Heart right ventricle (tissue), 16 donors: ENCODE measurements at regions of chr7 and their contacts with region 1.

Region 1: GRCh38 chr7:74289018-74289658 is at the start of gene CLIP2:
- DNase-seq: peak; percentile 79 to 85
- ATAC-seq: peak; percentile 84 to 95 (median 89)
- H3K4me3 ChIP-seq: peak within 1 kb of the TSS; percentile 59 to 91 (median 80)
- H3K27ac ChIP-seq: peak within 1 kb of the TSS in 9 of 10 donors; percentile 68 to 89 (median 80)
- H3K4me1 ChIP-seq: peaks cover 9 to 46% (median 36%) of the 10 kb centered on the region in 9 donors
- H3K27me3 ChIP-seq: no peaks in the 10 kb centered on the region
- CTCF ChIP-seq: no peak
- total RNA-seq, gene CLIP2: 5.1 to 11.3 (median 7.0) TPM

Region 2: DNA sequence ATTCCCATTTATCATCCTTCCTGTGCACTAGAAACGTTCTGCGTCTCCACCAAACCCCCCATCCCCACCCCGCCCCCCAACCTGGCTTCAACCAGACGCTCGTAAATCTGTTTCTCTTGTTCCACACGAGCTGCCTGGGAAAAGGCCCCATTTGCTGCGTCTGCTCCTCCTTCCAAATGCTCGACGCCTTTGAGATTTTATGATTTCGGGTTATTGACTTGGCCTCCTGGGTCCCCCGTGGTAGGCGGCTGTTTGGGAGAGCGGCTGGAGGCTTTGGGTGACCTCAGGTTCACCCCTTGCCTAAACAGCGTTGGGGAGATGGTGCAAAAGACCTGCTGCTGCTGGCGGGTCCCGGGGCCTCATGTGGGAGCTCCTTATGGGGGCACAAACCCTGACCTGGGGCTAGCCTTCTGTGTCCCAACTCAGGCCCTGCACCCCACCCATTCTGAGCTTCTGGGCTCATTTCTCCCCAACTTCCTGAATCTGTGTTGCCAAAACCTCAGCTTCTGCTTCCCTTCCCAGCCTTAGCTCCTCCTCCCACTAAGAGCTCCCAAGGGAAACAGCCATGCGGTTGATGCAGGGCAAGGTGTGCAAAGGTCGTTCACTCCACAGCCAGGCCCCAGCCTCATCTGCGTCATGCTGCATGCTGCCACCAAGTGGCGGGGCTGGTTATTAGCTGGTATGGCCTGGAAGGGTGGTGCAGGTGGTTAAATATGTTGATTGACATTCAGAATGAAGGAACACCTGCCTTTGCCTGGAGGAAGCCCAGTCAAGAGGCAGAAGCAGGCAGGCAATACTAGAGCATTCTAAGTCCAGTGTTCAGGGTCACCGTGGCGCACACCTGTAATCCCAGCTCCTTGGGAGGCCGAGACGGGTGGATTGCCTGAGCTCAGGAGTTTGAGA is 310.2 kb before region 1 on chr7:
- intact Hi-C with region 1: no loop called
- DNase-seq: peak; percentile 41 to 46
- ATAC-seq: peak in 7 of 8 donors; percentile 42 to 73 (median 61)
- H3K4me3 ChIP-seq: no peak overlapping the region
- H3K27ac ChIP-seq: no peak overlapping the region
- H3K4me1 ChIP-seq: peaks cover 0 to 17% (median 11%) of the 10 kb centered on the region in 9 donors
- H3K27me3 ChIP-seq: no peaks in the 10 kb centered on the region
- CTCF ChIP-seq: peak; percentile 10 to 52 (median 41)

Region 3: GRCh38 chr7:74242122-74242443 is 47.1 kb before region 1 on chr7:
- intact Hi-C with region 1: no loop called
- DNase-seq: no peak
- ATAC-seq: no peak
- H3K4me3 ChIP-seq: no peak overlapping the region
- H3K27ac ChIP-seq: peak overlapping the region in 1 of 10 donors; percentile 15
- H3K4me1 ChIP-seq: peaks cover 0 to 10% (median 0%) of the 10 kb centered on the region in 9 donors
- H3K27me3 ChIP-seq: no peaks in the 10 kb centered on the region
- CTCF ChIP-seq: no peak

Region 4: DNA sequence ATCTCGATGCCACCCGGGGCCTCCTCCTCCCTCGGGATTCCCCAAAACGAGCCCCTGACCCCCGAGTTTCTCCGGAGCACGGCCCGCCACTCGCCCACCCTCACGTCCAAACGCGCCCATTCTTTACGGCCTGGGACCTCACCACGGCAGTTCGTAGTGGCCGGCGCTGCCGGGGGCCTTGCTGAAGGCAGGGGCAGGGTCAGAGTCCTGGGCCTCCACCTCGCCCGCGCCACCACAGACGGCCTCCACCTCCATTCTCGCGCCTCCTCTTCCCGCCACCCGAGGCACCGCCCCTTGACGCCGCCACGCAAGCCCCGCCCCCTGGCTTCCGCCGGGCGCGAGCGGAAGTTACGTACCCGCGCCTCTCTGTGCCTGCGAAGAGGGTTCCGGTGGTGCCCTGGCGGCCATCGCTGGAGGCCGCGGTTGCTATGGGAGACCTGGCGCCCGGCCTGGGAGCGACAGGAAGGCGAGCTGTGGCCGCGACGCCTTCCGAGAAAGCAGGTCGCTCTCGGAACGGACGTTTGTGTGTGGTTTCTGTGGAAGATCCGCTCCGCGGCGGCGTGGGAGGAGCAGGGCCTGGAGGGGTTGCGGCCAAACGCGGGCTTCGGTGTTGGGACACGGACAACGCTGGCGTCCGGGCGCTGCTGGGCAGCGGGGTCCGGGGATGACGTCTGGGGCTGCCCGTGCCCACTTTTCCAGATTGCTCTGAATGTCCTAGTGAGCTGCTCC is 34.8 kb before region 1 on chr7 and contains the start of gene RFC2:
- intact Hi-C with region 1: loop called in 6 of 10 experiments (anchors 5 kb)
- DNase-seq: peak; percentile 97 to 98
- ATAC-seq: peak; percentile 99 to 100 (median 100)
- H3K4me3 ChIP-seq: peak within 1 kb of the TSS; percentile 47 to 95 (median 78)
- H3K27ac ChIP-seq: peak within 1 kb of the TSS; percentile 89 to 98 (median 93)
- H3K4me1 ChIP-seq: peaks cover 3 to 38% (median 28%) of the 10 kb centered on the region in 9 donors
- H3K27me3 ChIP-seq: no peaks in the 10 kb centered on the region
- CTCF ChIP-seq: peak in 8 of 9 donors; percentile 16 to 54 (median 43)
- total RNA-seq, gene RFC2: 7.0 to 13.1 (median 10.7) TPM

Region 5: DNA sequence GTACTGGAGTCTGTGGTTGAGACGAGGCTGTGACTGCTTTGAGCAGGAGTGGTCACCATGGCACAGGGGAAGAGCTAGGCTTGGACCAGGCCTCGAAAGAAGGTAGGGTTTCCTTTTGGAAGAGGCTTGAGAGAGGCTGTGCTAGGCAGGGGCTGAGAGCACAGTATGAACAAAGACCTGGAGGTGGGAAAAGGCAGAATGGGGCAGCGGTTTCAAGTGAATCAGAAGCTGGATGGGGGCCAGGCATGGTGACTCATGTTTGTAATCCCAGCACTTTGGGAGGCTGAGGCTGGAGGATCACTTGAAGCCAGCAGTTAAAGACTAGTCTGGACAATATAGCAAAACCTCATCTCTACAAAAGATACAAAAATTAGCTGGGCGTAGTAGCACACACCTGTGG is 66.0 kb after region 1 on chr7:
- intact Hi-C with region 1: loop called in 1 of 10 experiments (anchors 5 kb)
- DNase-seq: no peak
- ATAC-seq: peak in 2 of 8 donors; percentile 19 to 37
- H3K4me3 ChIP-seq: no peak overlapping the region
- H3K27ac ChIP-seq: no peak overlapping the region
- H3K4me1 ChIP-seq: peaks cover 0 to 7% (median 0%) of the 10 kb centered on the region in 9 donors
- H3K27me3 ChIP-seq: no peaks in the 10 kb centered on the region
- CTCF ChIP-seq: no peak

Region 6: GRCh38 chr7:74371381-74372341 is 82.5 kb after region 1 on chr7:
- intact Hi-C with region 1: loop called in 2 of 10 experiments (anchors 5 to 10 kb)
- DNase-seq: no peak
- ATAC-seq: peak in 3 of 8 donors; percentile 14 to 18 (median 15)
- H3K4me3 ChIP-seq: no peak overlapping the region
- H3K27ac ChIP-seq: peak overlapping the region in 4 of 10 donors; percentile 1 to 41 (median 33)
- H3K4me1 ChIP-seq: peaks cover 0 to 25% (median 0%) of the 10 kb centered on the region in 9 donors
- H3K27me3 ChIP-seq: no peaks in the 10 kb centered on the region
- CTCF ChIP-seq: no peak

Region 7: DNA sequence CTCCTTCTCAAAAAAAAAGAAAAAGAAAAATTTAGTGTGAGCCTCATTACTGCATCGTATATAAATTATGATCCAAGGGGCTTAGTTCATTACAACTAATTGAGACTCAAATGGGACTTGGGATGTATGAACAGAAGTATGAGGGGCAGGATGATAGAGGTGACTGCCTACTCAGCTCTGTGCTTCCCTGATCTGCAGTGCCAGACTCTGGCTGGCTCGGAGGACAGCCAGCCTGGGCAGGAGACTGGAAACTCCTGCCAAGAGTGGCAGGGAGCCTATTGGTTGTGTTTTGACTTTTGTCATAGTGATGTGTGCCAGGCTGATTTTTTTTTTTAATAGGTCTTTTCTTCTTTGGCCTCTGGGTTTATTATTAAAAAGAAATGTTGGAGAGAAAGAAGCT is 90.8 kb after region 1 on chr7:
- intact Hi-C with region 1: loop called in 3 of 10 experiments (anchors 5 to 10 kb)
- DNase-seq: peak; percentile 35 to 40
- ATAC-seq: peak; percentile 66 to 97 (median 90)
- H3K4me3 ChIP-seq: no peak overlapping the region
- H3K27ac ChIP-seq: no peak overlapping the region
- H3K4me1 ChIP-seq: peaks cover 0 to 7% (median 0%) of the 10 kb centered on the region in 9 donors
- H3K27me3 ChIP-seq: no peaks in the 10 kb centered on the region
- CTCF ChIP-seq: no peak